ENCODE measurements at regions of chr3 and their contacts with region 1.

Region 1: DNA sequence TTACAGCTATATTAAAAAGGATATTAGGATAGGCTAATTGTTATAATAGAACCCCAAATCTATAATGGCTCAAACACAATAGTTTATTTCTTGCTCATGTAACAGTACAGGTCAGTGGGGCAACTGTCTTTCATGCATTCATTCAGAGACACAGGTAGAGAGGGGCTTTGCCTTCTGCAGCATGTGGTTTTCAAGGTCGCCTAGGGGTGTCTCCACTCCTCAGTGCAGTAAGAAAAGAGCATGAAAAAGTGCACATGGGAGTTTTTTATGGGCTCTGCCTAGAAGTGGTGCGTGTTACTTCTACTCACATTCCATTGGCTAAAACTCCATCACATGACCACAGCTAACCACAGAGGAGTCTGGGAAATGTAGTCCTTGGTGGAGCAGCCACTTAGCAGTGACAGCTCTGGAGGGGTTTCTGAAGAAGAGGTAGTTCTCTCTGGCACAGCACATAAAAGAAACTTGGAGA is 1.8 kb downstream of the ZBTB38 start:
- DNase-seq: peak; percentile 96
- ATAC-seq: peak; percentile 87
- H3K4me3 ChIP-seq: no peak overlapping the region
- H3K27ac ChIP-seq: peak overlapping the region; percentile 35
- H3K4me1 ChIP-seq: peaks cover 53% of the 10 kb centered on the region
- H3K27me3 ChIP-seq: no peaks in the 10 kb centered on the region
- CTCF ChIP-seq: peak; percentile 52 to 75 (median 69)
- EP300 ChIP-seq: no peak
- POLR2A ChIP-seq: peak; percentile 53
- RAD21 ChIP-seq: peak; percentile 80

Region 2: GRCh38 chr3:141303481-141304223 is 66.4 kb before region 1 on chr3:
- CTCF ChIA-PET with region 1: interaction called, 14 read pairs
- POLR2A ChIA-PET with region 1: interaction called, 4 read pairs
- RAD21 ChIA-PET with region 1: interaction called, 6 read pairs
- SMC1A ChIA-PET with region 1: interaction called, 5 read pairs
- in situ Hi-C with region 1: no loop called
- intact Hi-C with region 1: no loop called
- DNase-seq: peak; percentile 64
- ATAC-seq: peak; percentile 93
- H3K4me3 ChIP-seq: no peak overlapping the region
- H3K27ac ChIP-seq: no peak overlapping the region
- H3K4me1 ChIP-seq: peaks cover 8% of the 10 kb centered on the region
- H3K27me3 ChIP-seq: no peaks in the 10 kb centered on the region
- CTCF ChIP-seq: peak; percentile 55 to 78 (median 70); a peak in 5 of 6 replicates
- EP300 ChIP-seq: no peak
- POLR2A ChIP-seq: no peak
- RAD21 ChIP-seq: peak; percentile 89

Region 3: GRCh38 chr3:141336672-141337522 is 33.2 kb before region 1 on chr3:
- CTCF ChIA-PET with region 1: interaction called, 6 read pairs
- POLR2A ChIA-PET with region 1: interaction called, 7 read pairs
- RAD21 ChIA-PET with region 1: interaction called, 46 read pairs
- SMC1A ChIA-PET with region 1: interaction called, 43 read pairs
- in situ Hi-C with region 1: no loop called
- intact Hi-C with region 1: loop called (anchors 5 kb)
- DNase-seq: peak; percentile 95
- ATAC-seq: peak; percentile 90
- H3K4me3 ChIP-seq: peak overlapping the region; percentile 33
- H3K27ac ChIP-seq: peak overlapping the region; percentile 95
- H3K4me1 ChIP-seq: peaks cover 45% of the 10 kb centered on the region
- H3K27me3 ChIP-seq: no peaks in the 10 kb centered on the region
- CTCF ChIP-seq: no peak
- EP300 ChIP-seq: peak; percentile 27 to 98; a peak in 3 of 4 replicates
- POLR2A ChIP-seq: no peak
- RAD21 ChIP-seq: 0 out of 2 replicates have a peak, but pooled peaks have one; percentile 12

Region 4: GRCh38 chr3:141386611-141387111 is 16.6 kb after region 1 on chr3:
- CTCF ChIA-PET with region 1: interaction called, 87 read pairs
- POLR2A ChIA-PET with region 1: interaction called, 97 read pairs
- RAD21 ChIA-PET with region 1: interaction called, 110 read pairs
- SMC1A ChIA-PET with region 1: interaction called, 199 read pairs
- in situ Hi-C with region 1: no loop called
- intact Hi-C with region 1: no loop called
- DNase-seq: no peak
- ATAC-seq: peak; percentile 58
- H3K4me3 ChIP-seq: peak overlapping the region; percentile 67
- H3K27ac ChIP-seq: peak overlapping the region; percentile 94
- H3K4me1 ChIP-seq: peaks cover 30% of the 10 kb centered on the region
- H3K27me3 ChIP-seq: no peaks in the 10 kb centered on the region
- CTCF ChIP-seq: no peak
- EP300 ChIP-seq: no peak
- POLR2A ChIP-seq: peak; percentile 93
- RAD21 ChIP-seq: no peak

Region 5: DNA sequence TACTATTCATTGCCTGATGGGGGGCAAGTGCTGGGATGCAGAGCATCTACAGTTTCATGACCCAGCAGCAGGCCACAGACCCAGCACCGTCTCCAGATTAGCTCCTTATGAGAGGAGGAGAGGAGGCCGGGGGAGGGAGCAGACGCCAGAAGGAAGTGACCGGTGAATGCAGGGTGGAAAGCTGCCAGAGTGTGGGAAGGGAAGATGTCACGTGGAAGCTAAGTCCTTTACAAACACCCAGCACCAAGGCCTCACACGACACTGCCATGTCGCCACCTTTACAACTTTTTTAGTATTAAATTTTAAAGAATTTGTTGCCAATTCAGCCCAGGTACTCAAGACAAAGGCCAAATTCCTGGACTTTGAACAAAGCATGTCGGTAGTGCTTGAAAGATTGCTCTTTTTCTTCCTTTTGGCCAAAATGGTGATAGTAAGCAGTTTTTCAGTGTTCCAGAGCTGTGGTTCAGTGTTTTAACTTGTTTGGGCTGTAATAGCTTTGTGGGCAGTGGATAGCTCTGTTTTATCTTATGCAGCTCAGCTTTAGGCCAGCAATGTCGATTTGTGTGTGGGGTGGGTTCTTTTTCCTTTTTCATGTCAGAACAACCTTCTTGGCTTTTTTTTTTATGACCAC is 56.4 kb after region 1 on chr3:
- CTCF ChIA-PET with region 1: interaction called, 13 read pairs
- POLR2A ChIA-PET with region 1: interaction called, 6 read pairs
- RAD21 ChIA-PET with region 1: interaction called, 4 read pairs
- SMC1A ChIA-PET with region 1: interaction called, 18 read pairs
- in situ Hi-C with region 1: no loop called
- intact Hi-C with region 1: no loop called
- DNase-seq: no peak
- ATAC-seq: no peak
- H3K4me3 ChIP-seq: no peak overlapping the region
- H3K27ac ChIP-seq: no peak overlapping the region
- H3K4me1 ChIP-seq: peaks cover 7% of the 10 kb centered on the region
- H3K27me3 ChIP-seq: no peaks in the 10 kb centered on the region
- CTCF ChIP-seq: no peak
- EP300 ChIP-seq: no peak
- POLR2A ChIP-seq: no peak
- RAD21 ChIP-seq: no peak

Region 6: DNA sequence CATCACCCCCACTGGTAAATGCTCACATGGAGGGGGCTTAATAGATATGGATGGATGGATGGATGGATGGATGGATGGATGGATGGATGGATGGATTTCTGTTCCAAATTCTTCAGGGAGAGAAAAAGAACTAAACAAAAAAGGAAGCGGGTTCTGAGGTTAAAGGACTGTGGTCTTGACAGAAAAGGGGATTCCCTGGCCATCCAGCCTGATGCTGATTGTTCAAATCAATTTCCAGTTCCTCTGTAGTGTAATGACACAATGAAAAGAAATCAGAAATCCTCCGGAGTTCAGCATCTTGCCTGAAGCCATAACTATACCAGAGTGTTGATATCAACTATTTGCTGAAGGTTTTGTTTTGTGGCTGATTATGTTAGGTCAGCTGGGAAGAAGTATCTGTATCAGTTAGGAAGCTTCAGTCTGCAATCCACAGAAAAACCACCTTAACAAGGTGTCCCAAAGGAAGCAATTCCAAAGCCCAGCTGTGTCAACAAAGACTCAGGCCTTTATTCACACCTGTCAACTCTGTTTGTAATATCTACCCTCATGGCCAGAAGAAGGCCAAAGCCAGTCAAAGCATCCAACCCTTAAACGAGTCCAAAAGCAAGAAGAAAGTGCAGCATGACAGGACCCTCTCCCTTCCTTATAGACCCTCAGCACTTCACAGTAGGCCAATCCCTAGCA is 92.2 kb after region 1 on chr3:
- CTCF ChIA-PET with region 1: no interaction called
- POLR2A ChIA-PET with region 1: no interaction called
- RAD21 ChIA-PET with region 1: no interaction called
- SMC1A ChIA-PET with region 1: no interaction called
- in situ Hi-C with region 1: no loop called
- intact Hi-C with region 1: no loop called
- DNase-seq: no peak
- ATAC-seq: peak; percentile 45
- H3K4me3 ChIP-seq: no peak overlapping the region
- H3K27ac ChIP-seq: no peak overlapping the region
- H3K4me1 ChIP-seq: peaks cover 3% of the 10 kb centered on the region; the same call in 1 of the 2 replicates
- H3K27me3 ChIP-seq: no peaks in the 10 kb centered on the region
- CTCF ChIP-seq: no peak
- EP300 ChIP-seq: no peak
- POLR2A ChIP-seq: no peak
- RAD21 ChIP-seq: no peak

Region 7: DNA sequence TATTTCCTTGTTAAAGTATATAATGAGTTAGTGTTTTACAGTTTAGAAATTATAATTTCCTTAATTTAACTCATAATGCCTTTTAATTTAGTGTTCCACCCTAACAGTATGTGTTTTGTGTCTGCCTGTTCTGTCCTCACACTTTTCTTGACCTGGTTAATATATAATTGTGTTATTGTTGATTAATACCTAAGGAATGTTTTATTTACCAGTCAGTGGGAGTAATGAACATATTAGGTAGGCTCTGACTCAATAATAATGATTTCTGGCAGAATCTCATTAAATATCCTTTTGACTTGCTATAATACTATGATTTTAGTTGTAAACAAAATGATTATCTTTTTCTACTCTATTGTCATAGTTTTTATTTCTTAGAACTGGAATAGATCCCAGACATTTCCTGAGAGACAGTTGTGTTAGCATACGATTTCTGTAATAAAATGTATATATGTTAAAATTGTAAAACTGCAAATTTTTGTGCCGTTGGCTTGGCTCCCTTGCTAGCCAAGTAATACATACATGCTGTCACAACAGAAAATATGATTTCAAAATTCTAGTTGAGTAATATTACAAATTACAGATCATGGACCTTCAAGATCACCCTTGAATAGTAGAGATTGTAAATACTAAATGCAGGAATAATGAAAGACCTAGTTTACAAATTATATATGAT is 168.6 kb after region 1 on chr3:
- CTCF ChIA-PET with region 1: no interaction called
- POLR2A ChIA-PET with region 1: no interaction called
- RAD21 ChIA-PET with region 1: no interaction called
- SMC1A ChIA-PET with region 1: no interaction called
- in situ Hi-C with region 1: no loop called
- intact Hi-C with region 1: no loop called
- DNase-seq: no peak
- ATAC-seq: no peak
- H3K4me3 ChIP-seq: no peak overlapping the region
- H3K27ac ChIP-seq: no peak overlapping the region
- H3K4me1 ChIP-seq: no peaks in the 10 kb centered on the region
- H3K27me3 ChIP-seq: no peaks in the 10 kb centered on the region
- CTCF ChIP-seq: no peak
- EP300 ChIP-seq: no peak
- POLR2A ChIP-seq: no peak
- RAD21 ChIP-seq: no peak